ENCODE measurements at regions of chr10 and their contacts with region 1.

Region 1: DNA sequence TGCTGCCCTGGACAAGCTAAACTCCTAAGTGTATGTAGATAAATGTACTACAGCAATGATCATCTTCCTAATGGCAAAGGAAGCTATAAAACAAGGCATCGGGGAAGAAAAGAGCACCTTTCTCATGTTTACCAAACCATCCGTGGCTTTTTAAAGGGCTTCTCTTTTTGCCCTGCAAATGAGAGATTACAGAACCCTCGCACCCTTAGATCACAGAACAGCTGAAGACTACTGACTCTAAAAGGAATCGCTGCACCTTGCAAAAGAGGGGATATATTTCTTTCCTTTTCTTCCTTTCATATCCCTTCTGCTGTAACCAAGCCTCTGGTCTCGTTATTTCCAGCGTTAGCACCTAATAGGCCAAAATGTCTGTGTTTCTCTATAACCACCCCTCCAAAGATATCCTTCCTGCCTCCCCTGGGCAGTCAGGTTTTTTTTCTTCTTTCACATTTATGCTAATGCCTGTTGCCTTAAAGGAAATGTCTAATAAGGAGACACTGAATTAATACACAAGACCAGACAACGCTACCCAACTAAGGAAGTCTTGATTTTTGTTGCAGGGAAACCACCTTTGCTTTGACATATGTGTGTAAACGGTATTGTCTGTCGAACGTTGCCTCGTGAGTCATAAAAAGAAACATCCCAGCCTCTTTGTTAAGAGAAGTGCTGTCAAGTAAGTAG is 10.5 kb downstream of the ST8SIA6 start:
- DNase-seq: no peak
- H3K4me3 ChIP-seq: no peak overlapping the region
- H3K27ac ChIP-seq: no peak overlapping the region
- H3K27me3 ChIP-seq: peaks cover 3% of the 10 kb centered on the region
- CTCF ChIP-seq: no peak

Region 2: DNA sequence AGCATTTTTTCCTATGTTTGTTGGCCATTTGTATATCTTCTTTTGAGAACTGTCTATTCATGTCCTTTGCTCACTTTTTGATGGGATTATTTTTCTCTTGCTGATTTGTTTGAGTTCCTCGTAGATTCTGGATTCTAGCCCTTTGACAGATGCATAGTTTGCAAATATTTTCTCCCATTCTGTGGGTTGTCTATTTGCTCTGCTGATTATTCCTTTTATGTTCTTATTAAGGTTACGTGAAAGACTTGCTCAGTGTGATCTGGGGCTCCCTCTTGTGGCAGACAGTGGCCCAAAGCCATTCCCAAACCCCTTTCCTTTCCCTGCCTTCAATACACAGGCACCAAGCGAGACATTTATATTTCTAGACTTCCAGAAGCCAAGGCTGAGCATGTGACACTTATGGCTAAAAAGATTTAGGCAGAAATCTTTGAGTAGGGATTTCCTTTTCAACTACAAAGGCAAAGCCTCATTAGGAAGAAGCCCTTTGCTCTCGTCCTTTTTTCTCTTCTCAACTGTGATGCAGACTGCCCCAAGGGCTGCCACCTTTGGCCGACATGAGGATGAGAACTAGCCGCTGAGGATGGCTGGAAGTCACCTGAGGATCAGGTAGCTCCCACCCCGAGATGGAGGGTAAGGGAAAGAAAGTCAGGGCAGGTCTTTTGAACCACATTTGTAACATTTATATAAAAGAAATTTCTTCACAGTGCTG is 13.0 kb before region 1 on chr10:
- CTCF ChIA-PET with region 1: interaction called, 20 read pairs
- POLR2A ChIA-PET with region 1: no interaction called
- DNase-seq: peak; percentile 61
- H3K4me3 ChIP-seq: no peak overlapping the region
- H3K27ac ChIP-seq: no peak overlapping the region
- H3K27me3 ChIP-seq: peaks cover 7% of the 10 kb centered on the region
- CTCF ChIP-seq: peak; percentile 95

Measured in AG04450 (cell line).